ENCODE measurements at regions of chr3 and their contacts with region 1.

Region 1: GRCh38 chr3:120558771-120559241 is 37.3 kb upstream of the NDUFB4 start:
- DNase-seq: peak; percentile 65 to 84 (median 74)
- ATAC-seq: peak; percentile 81
- H3K4me3 ChIP-seq: peak overlapping the region; percentile 35
- H3K27ac ChIP-seq: peak overlapping the region; percentile 71; the same call in 2 of the 3 replicates
- H3K4me1 ChIP-seq: peaks cover 0 to 7% of the 10 kb centered on the region in 2 experiments; a peak in 3 of 5 replicates
- H3K27me3 ChIP-seq: no peaks in the 10 kb centered on the region; a peak in 1 of 5 replicates
- CTCF ChIP-seq: peak; percentile 78 to 87 (median 86)
- EP300 ChIP-seq: no peak
- POLR2A ChIP-seq: no peak
- RAD21 ChIP-seq: peak; percentile 79 to 82

Region 2: DNA sequence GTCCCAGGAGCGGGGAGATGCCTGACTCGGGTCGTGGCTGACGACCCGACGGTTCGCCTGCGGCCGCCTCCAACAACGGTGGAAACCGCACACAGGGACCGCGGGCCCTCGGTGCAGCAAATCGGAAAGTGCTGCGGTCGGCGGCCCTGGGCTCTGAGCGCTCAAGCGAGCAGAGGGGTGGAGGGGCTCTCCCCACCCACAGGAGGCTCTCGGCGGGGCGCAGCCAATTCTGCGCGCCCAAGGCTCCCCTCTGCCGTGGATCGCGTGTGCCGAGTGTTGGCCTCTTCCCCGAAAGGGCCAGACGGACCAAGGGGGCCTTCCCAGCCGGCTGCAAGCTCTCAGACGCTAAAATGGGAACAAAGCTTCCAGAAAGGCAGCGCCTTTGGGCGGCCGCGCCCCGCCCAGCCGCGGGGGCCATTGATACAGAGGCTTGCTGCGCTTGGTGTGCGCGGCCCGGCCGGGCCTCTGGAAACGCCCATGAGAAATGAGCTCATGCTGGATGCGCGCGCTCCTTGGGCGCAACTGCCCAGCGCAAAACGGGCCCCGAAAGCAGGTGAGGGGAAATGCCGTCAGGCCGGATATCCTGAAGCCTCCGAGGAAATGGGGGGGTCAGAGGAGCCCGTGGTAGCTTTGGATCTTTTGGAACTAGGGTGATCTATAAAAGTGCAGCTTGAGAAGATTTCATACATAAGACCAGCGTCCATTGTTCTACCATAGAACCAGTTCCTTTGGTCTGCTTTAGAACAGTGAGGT is 463.4 kb before region 1 on chr3:
- CTCF ChIA-PET with region 1: no interaction called
- POLR2A ChIA-PET with region 1: interaction called, 3 read pairs
- in situ Hi-C with region 1: no loop called
- intact Hi-C with region 1: loop called (anchors 10 kb)
- DNase-seq: peak; percentile 54 to 88 (median 60)
- ATAC-seq: peak; percentile 76
- H3K4me3 ChIP-seq: peak overlapping the region; percentile 92
- H3K27ac ChIP-seq: peak overlapping the region; percentile 99
- H3K4me1 ChIP-seq: peaks cover 6 to 10% of the 10 kb centered on the region in 2 experiments; a peak in 3 of 5 replicates
- H3K27me3 ChIP-seq: no peaks in the 10 kb centered on the region
- CTCF ChIP-seq: no peak
- EP300 ChIP-seq: peak; percentile 20; the same call in 1 of the 2 replicates
- POLR2A ChIP-seq: peak; percentile 97
- RAD21 ChIP-seq: no peak

Region 3: DNA sequence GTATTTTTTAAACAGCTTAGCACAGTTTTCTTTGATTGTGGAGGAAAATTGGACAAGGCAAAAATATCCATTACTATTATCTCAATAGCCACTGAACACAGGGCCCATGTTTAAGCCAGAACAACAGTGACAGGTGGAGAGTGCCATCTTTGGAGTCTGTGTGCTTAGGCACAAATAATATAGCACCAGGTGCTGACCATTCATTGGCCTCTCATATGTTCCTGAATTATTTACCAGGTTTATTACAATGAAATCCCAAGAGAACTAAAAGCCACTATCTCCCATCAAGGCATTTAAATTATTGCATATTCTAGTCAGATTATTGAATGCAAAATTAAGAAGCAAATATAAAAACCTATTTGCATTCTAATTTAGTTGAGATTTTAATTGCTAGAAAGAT is 313.4 kb before region 1 on chr3:
- CTCF ChIA-PET with region 1: interaction called, 8 read pairs
- POLR2A ChIA-PET with region 1: no interaction called
- in situ Hi-C with region 1: no loop called
- intact Hi-C with region 1: loop called (anchors 1 kb)
- DNase-seq: no peak
- ATAC-seq: no peak
- H3K4me3 ChIP-seq: no peak overlapping the region
- H3K27ac ChIP-seq: no peak overlapping the region
- H3K4me1 ChIP-seq: no peaks in the 10 kb centered on the region
- H3K27me3 ChIP-seq: no peaks in the 10 kb centered on the region
- CTCF ChIP-seq: no peak
- EP300 ChIP-seq: no peak
- POLR2A ChIP-seq: no peak
- RAD21 ChIP-seq: no peak

Region 4: DNA sequence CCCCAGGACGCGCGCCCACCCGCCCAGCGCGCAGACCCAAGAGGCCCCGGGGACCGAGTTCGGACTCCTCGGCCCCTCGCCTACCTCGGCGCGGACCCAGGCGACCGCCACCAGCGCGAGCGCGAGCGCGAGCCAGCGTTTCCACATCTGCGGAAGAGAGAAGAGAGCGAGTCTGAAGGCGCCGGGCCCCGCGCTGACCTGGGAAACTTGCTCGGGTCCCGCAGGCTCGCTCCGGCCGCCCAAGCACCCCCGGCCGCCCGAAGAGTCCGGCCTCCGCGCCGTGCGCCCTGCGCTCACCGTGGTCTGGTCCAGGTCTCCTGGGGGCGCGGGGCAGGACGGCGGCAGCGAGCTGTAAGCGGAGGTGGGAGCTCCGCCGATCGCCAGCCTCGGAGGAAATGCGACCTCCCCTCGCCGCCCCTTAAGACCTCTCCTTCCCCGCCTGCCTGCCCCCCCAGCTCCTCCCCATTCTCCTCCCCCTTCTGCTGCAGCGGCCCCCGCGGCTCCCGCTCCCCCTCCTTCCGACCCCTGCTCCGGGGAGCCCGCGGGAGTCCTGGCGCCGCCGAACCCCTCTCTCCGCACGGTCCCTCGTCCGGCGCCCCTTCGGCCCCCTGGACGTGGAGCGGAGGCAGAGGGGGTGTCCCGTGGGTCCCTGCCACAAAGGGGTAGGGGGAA is 108.1 kb before region 1 on chr3 and contains the start of gene FSTL1:
- CTCF ChIA-PET with region 1: no interaction called
- POLR2A ChIA-PET with region 1: no interaction called
- in situ Hi-C with region 1: loop called (anchors 10 kb)
- intact Hi-C with region 1: no loop called
- DNase-seq: no peak
- ATAC-seq: no peak
- H3K4me3 ChIP-seq: no peak within 1 kb of the TSS
- H3K27ac ChIP-seq: no peak within 1 kb of the TSS
- H3K4me1 ChIP-seq: peaks cover 0 to 10% of the 10 kb centered on the region in 2 experiments; a peak in 2 of 5 replicates
- H3K27me3 ChIP-seq: peaks cover 7 to 21% of the 10 kb centered on the region in 2 experiments; a peak in 4 of 5 replicates
- CTCF ChIP-seq: no peak
- EP300 ChIP-seq: no peak
- POLR2A ChIP-seq: no peak
- RAD21 ChIP-seq: no peak
- polyA plus RNA-seq, gene FSTL1: 0.01 TPM in 1 of 2 experiments, not detected in the other

Region 5: DNA sequence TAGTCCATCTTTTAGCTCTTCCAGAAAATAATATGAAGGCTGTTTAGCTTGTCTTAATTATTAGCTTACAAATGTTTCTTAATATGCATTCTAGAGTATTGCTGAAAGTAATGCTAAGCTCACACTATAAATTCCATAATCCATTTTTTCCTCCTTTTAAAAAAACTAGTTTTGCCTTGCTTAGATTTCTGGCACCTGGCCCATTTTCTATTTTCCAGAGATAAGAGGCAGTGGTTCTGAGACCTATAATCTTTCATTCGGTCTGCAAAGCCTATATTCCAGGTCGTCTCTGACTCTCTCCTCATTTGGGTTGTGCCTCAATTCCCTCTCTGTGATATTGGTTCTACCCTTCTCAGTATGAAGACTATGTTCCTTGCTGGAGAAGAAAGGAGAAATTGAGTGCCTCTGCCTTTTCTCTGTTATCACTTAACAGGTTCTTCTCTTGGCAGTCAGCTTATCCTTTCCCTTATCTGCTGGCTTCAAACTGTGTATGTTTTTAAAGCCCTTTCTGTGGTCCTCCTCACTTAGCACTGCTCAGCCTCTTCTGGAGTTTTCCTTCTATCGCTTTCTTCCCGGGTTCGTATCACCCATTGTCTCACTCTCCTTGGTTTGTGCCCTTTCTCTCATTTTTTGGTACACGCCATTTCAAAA is 42.8 kb before region 1 on chr3:
- CTCF ChIA-PET with region 1: no interaction called
- POLR2A ChIA-PET with region 1: no interaction called
- in situ Hi-C with region 1: no loop called
- intact Hi-C with region 1: no loop called
- DNase-seq: peak in 1 of 4 experiments; percentile 14
- ATAC-seq: no peak
- H3K4me3 ChIP-seq: no peak overlapping the region
- H3K27ac ChIP-seq: no peak overlapping the region
- H3K4me1 ChIP-seq: no peaks in the 10 kb centered on the region
- H3K27me3 ChIP-seq: no peaks in the 10 kb centered on the region
- CTCF ChIP-seq: no peak
- EP300 ChIP-seq: no peak
- POLR2A ChIP-seq: no peak
- RAD21 ChIP-seq: no peak

Region 6: GRCh38 chr3:120795017-120795648 is 236.3 kb after region 1 on chr3:
- CTCF ChIA-PET with region 1: interaction called, 22 read pairs
- POLR2A ChIA-PET with region 1: no interaction called
- in situ Hi-C with region 1: no loop called
- intact Hi-C with region 1: loop called (anchors 1 kb)
- DNase-seq: peak; percentile 55 to 77 (median 56)
- ATAC-seq: peak; percentile 98
- H3K4me3 ChIP-seq: no peak overlapping the region
- H3K27ac ChIP-seq: no peak overlapping the region
- H3K4me1 ChIP-seq: peaks cover 0 to 2% of the 10 kb centered on the region in 2 experiments; a peak in 2 of 5 replicates
- H3K27me3 ChIP-seq: no peaks in the 10 kb centered on the region
- CTCF ChIP-seq: peak; percentile 75 to 80 (median 77)
- EP300 ChIP-seq: no peak
- POLR2A ChIP-seq: no peak
- RAD21 ChIP-seq: peak; percentile 89 to 91